Esophagus squamous epithelium (tissue), 5 donors: ENCODE measurements at regions of chr17 and their contacts with region 1.

Region 1: DNA sequence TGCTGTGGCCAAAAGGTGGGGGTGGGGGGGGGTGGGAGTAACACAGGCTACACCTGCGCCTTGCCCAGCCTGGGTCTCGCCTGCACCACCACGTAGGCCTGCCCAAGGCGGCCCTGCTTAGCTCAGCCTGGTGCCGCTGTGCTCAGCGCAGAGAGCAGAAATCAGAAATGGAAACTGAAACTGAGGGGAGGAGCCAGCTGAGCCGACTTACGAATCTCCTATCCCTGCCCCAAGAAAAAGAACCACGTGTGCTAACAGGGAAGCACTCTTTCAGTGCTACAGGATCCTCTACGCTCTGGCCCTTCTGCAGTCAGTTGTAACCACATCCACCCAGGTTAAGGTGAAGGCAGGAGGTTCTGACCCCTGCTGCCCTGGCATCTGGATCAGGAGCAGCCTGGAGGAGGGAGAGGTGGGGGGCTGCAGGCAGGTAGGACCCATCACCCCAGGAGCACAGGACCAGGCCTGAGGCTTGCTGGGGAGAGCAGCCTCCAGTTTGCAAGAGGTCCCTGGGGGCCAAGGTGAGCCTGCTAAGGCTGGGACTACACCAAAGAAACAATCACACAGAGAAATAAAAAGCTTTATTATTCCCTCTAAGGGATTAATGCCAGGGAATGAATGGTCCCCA is at the start of gene DHX58:
- DNase-seq: no peak
- H3K4me3 ChIP-seq: peak within 1 kb of the TSS; percentile 43 to 73 (median 64)
- H3K27ac ChIP-seq: peak within 1 kb of the TSS; percentile 87 to 97 (median 94)
- H3K4me1 ChIP-seq: peaks cover 20 to 59% (median 20%) of the 10 kb centered on the region in 3 donors
- H3K27me3 ChIP-seq: no peaks in the 10 kb centered on the region
- CTCF ChIP-seq: no peak
- POLR2A ChIP-seq: peak in 2 of 4 donors; percentile 18 to 68
- total RNA-seq, gene DHX58: 3.9 to 10.4 (median 8.9) TPM

Region 2: GRCh38 chr17:42027961-42028790 is 84.5 kb before region 1 on chr17:
- intact Hi-C with region 1: loop called (anchors 2 kb)
- DNase-seq: no peak
- H3K4me3 ChIP-seq: no peak overlapping the region
- H3K27ac ChIP-seq: no peak overlapping the region
- H3K4me1 ChIP-seq: peaks cover 14 to 24% (median 15%) of the 10 kb centered on the region in 3 donors
- H3K27me3 ChIP-seq: peaks cover 0 to 6% (median 0%) of the 10 kb centered on the region in 4 donors
- CTCF ChIP-seq: peak in 2 of 6 experiments; percentile 16 to 40
- POLR2A ChIP-seq: no peak

Region 3: GRCh38 chr17:42067351-42068091 is 45.1 kb before region 1 on chr17:
- intact Hi-C with region 1: loop called (anchors 5 kb)
- DNase-seq: no peak
- H3K4me3 ChIP-seq: no peak overlapping the region
- H3K27ac ChIP-seq: no peak overlapping the region
- H3K4me1 ChIP-seq: peaks cover 0 to 18% (median 8%) of the 10 kb centered on the region in 3 donors
- H3K27me3 ChIP-seq: peaks cover under 1 to 45% (median 7%) of the 10 kb centered on the region in 4 donors
- CTCF ChIP-seq: peak; percentile 82 to 95 (median 84)
- POLR2A ChIP-seq: no peak